AG04450 (cell line): ENCODE measurements at regions of chr9 and their contacts with region 1.

Region 1: DNA sequence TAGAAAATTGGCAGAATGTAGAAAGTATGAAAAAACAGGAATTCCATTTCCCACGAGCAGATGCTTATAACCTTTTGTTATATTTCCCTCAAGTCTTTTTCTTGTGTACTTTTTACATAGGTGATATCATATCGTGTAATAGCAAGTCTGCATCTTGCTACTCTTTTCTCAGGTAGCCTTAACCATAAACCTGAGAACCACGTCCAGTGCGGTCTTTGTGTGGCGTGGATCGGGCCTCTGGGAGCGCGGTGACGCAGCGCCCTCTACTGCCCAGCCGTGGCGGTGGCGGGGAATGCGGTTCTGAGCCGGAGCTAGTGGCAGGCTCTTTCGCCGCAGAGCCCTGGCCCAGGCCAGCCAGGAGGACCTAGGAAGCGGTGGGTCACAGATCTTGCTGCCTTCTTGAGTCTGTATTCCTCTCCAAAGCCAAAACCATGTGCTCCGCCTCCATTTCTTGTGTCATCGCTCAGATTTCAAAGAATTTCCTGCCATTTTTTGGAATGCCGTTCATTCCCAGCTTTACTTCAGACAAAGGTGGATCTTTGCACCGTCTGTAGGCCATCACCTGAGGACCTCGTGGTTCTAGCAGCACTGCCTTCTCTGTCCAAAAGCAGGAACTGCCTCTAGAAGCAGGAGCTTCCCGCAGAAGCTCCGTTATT is 71.9 kb downstream of the MVB12B start:
- DNase-seq: peak; percentile 10
- H3K4me3 ChIP-seq: no peak overlapping the region
- H3K27ac ChIP-seq: no peak overlapping the region
- H3K27me3 ChIP-seq: no peaks in the 10 kb centered on the region
- CTCF ChIP-seq: peak; percentile 99

Region 2: DNA sequence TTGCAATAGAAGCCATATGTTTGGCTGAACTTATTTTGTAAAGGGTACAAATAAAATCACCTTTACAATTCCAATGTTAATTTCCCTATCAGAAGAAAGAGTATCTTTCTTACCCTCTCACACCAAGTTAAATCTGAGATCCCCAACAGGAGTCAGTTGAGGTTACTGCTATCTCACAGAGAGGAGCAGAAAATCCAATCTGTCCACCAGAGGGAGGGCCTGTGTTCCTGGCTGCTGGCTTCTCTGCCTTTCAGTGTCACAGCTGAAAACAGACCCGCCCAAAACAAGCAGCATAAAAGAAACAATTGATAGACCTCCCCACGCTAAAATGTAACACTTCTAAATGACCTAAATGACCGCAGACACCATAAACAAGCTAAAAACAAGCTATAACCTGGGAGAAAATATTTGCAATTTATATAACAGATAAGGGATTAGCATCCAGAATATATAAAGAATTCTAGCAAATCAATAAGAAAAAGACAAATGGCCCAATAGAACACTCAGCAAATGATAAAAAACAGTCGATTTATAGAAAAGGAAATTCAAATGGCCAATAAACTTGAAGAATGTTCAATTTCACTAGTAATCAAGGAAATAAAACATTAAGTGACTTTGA is 96.4 kb before region 1 on chr9:
- CTCF ChIA-PET with region 1: interaction called, 81 read pairs
- POLR2A ChIA-PET with region 1: no interaction called
- DNase-seq: peak; percentile 37
- H3K4me3 ChIP-seq: no peak overlapping the region
- H3K27ac ChIP-seq: no peak overlapping the region
- H3K27me3 ChIP-seq: peaks cover 27% of the 10 kb centered on the region
- CTCF ChIP-seq: peak; percentile 92

Region 3: GRCh38 chr9:126317513-126317912 is 81.0 kb before region 1 on chr9:
- CTCF ChIA-PET with region 1: interaction called, 37 read pairs
- POLR2A ChIA-PET with region 1: no interaction called
- DNase-seq: no peak
- H3K4me3 ChIP-seq: no peak overlapping the region
- H3K27ac ChIP-seq: no peak overlapping the region
- H3K27me3 ChIP-seq: peaks cover 4% of the 10 kb centered on the region
- CTCF ChIP-seq: peak; percentile 32; the same call in 1 of the 2 replicates

Region 4: DNA sequence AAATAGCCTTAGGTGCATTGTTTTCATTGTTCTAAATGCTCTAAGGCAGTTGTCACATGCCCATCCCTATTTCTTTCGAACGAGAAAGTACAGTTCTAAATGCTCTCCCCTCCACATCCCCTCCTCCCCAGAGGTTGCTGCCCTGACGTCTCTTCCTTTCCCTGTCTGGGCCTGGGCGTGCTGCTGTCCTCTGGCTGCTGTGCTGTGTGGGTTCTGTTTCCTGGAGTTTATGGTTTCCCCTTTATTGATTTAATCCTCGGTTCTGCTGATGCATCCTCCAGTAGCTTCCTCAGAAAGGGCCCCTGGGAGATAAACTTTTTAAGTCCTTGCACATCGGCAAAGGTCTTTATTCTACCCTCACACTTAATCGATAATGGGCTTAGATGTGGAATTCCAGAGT is 23.1 kb before region 1 on chr9:
- CTCF ChIA-PET with region 1: interaction called, 11 read pairs
- POLR2A ChIA-PET with region 1: no interaction called
- DNase-seq: no peak
- H3K4me3 ChIP-seq: no peak overlapping the region
- H3K27ac ChIP-seq: no peak overlapping the region
- H3K27me3 ChIP-seq: no peaks in the 10 kb centered on the region
- CTCF ChIP-seq: no peak

Region 5: DNA sequence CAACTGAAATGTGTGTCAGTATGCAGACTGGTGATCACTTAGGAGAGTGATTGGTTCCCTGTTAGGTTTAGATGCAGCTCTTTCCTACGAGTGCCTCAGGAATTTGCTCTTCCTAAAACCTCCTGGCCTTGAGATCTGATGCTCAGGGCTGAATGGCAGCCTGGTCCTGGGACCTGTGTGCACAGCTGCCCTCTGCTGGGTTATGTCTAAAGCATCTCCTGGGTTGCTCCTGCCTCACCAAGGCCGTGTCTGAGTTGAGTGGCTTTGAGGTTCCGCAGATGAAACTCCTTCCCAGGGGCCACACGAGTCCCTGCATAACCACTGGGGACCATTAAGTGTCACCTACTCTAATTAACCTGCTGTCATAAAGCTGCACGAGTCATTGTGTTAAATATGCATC is 12.4 kb before region 1 on chr9:
- CTCF ChIA-PET with region 1: interaction called, 18 read pairs
- POLR2A ChIA-PET with region 1: no interaction called
- DNase-seq: no peak
- H3K4me3 ChIP-seq: no peak overlapping the region
- H3K27ac ChIP-seq: no peak overlapping the region
- H3K27me3 ChIP-seq: no peaks in the 10 kb centered on the region
- CTCF ChIP-seq: peak; percentile 39

Region 6: GRCh38 chr9:126490871-126491567 is 92.5 kb after region 1 on chr9:
- CTCF ChIA-PET with region 1: interaction called, 43 read pairs
- POLR2A ChIA-PET with region 1: no interaction called
- DNase-seq: peak; percentile 33
- H3K4me3 ChIP-seq: no peak overlapping the region
- H3K27ac ChIP-seq: no peak overlapping the region
- H3K27me3 ChIP-seq: no peaks in the 10 kb centered on the region
- CTCF ChIP-seq: peak; percentile 96

Region 7: GRCh38 chr9:126558051-126558665 is 159.6 kb after region 1 on chr9:
- CTCF ChIA-PET with region 1: no interaction called
- POLR2A ChIA-PET with region 1: no interaction called
- DNase-seq: no peak
- H3K4me3 ChIP-seq: no peak overlapping the region
- H3K27ac ChIP-seq: no peak overlapping the region
- H3K27me3 ChIP-seq: peaks cover 24% of the 10 kb centered on the region
- CTCF ChIP-seq: peak; percentile 96